Sigmoid colon (tissue), 7 donors: ENCODE measurements at regions of chr15 and their contacts with region 1.

Region 1: GRCh38 chr15:39488516-39488915 is 92.4 kb upstream of the THBS1 start:
- DNase-seq: peak; percentile 93
- H3K4me3 ChIP-seq: no peak overlapping the region
- H3K27ac ChIP-seq: peak overlapping the region; percentile 69 to 89 (median 84)
- H3K4me1 ChIP-seq: peaks cover 3 to 77% (median 68%) of the 10 kb centered on the region in 4 donors
- H3K27me3 ChIP-seq: no peaks in the 10 kb centered on the region
- CTCF ChIP-seq: no peak
- EP300 ChIP-seq: peak; percentile 65 to 92 (median 69)
- POLR2A ChIP-seq: no peak

Region 2: DNA sequence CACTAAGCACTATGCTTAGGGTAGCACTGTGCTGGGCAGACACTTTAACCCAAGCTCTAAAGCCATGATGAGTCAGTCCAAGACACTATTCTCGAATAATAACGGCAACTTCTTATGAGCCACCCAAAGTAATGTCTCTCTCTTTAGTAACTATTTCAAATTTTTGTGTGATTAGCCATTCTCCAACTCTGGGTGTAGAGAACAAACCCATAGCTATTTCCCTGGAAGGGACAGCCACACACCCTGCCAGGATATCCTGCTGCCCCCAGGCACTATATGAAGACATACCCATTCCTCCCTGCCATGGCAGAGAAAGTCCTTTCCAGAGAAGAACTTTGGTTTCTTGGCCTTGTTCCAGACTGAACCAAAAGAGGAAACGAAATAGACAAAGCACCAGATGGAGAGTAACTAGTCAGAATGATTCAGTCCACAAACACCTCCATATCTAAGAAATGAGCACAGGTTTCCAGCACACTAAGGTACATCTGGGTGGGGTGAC is 292.5 kb before region 1 on chr15:
- intact Hi-C with region 1: loop called (anchors 5 kb)
- DNase-seq: no peak
- H3K4me3 ChIP-seq: no peak overlapping the region
- H3K27ac ChIP-seq: peak overlapping the region in 1 of 4 donors; percentile 22
- H3K4me1 ChIP-seq: peaks cover 0 to 35% (median 30%) of the 10 kb centered on the region in 4 donors
- H3K27me3 ChIP-seq: no peaks in the 10 kb centered on the region
- CTCF ChIP-seq: no peak
- EP300 ChIP-seq: no peak
- POLR2A ChIP-seq: no peak

Region 3: GRCh38 chr15:39391230-39391629 is 97.3 kb before region 1 on chr15:
- intact Hi-C with region 1: loop called (anchors 5 kb)
- DNase-seq: peak; percentile 91
- H3K4me3 ChIP-seq: no peak overlapping the region
- H3K27ac ChIP-seq: peak overlapping the region in 3 of 4 donors; percentile 30 to 74 (median 47)
- H3K4me1 ChIP-seq: peaks cover 0 to 29% (median 15%) of the 10 kb centered on the region in 4 donors
- H3K27me3 ChIP-seq: no peaks in the 10 kb centered on the region
- CTCF ChIP-seq: no peak
- EP300 ChIP-seq: peak in 3 of 4 donors; percentile 3 to 81 (median 54)
- POLR2A ChIP-seq: no peak

Region 4: DNA sequence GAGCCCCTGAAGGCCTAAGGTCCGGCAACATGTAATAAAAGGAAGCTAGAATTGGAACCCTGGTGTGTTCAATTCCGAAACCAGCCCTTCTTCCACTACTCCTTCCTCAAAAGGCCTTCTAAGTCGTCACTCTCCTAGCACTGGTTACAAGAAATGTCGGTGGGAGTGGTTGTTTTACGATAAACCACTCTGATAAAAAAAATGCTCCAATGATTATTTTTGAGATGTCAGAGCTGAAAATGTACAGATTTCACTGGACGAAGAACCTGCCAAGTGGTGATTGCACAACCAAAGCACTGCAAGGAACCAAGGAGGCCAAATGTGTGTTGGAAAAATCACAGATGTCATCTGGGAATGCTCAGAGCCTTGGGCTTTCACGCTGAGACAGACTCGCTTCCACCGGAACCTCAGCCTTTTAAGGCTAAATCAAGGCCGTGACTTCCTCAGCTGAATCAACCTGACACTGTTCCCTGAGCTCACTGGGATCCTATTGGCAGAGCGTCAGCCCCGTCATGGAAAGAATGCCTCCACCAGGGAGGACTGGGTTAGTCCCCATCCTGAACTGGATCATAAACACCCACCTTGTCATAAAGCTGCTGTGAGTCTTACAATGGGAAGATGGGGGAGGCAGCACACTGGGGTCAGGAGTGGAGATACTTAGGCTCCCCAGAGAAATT is 15.8 kb before region 1 on chr15:
- intact Hi-C with region 1: loop called (anchors 2 kb)
- DNase-seq: peak; percentile 99
- H3K4me3 ChIP-seq: no peak overlapping the region
- H3K27ac ChIP-seq: peak overlapping the region; percentile 79 to 95 (median 85)
- H3K4me1 ChIP-seq: peaks cover 0 to 46% (median 30%) of the 10 kb centered on the region in 4 donors
- H3K27me3 ChIP-seq: no peaks in the 10 kb centered on the region
- CTCF ChIP-seq: no peak
- EP300 ChIP-seq: peak; percentile 95 to 99 (median 98)
- POLR2A ChIP-seq: no peak

Region 5: DNA sequence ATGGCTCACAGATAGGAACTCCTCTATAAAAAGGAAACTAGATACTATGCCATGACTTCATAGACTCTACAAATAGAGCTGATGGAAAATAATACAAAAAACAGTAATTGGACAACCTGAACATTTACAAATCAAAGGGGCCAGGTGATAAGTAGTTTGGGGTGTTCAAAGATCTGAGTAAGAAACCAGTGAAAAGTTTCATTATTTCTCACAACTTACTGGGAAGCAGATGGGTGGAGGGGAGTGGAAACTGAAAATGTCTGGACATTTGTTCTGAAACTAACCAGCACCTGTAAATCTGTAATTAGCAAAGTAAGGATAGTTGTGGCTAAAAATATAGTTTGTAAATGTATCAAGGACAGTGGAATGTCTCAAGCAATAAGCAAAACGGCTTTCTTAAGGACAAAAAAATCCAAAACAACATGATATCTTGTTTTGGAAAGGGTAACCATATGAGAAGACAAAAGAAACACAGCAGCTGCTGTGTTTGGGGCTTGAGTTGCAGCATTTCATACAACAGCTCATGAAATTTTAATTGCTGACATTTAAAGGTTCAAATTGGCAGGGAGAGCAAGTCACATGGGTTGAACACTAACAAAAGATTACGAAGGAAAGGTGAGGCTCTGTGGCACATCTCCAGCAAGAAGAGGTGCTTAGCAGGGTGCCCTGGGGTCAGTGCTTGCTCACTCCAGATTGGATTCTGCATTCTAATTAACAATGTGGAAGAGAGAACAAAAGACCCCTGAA is 65.6 kb after region 1 on chr15:
- intact Hi-C with region 1: loop called (anchors 2 kb)
- DNase-seq: peak; percentile 85
- H3K4me3 ChIP-seq: no peak overlapping the region
- H3K27ac ChIP-seq: peak overlapping the region; percentile 4 to 80 (median 74)
- H3K4me1 ChIP-seq: peaks cover 0 to 48% (median 44%) of the 10 kb centered on the region in 4 donors
- H3K27me3 ChIP-seq: no peaks in the 10 kb centered on the region
- CTCF ChIP-seq: no peak
- EP300 ChIP-seq: peak; percentile 69 to 77 (median 77)
- POLR2A ChIP-seq: no peak